B cell (primary cell): ENCODE measurements at regions of chr17 and their contacts with region 1.

Region 1: DNA sequence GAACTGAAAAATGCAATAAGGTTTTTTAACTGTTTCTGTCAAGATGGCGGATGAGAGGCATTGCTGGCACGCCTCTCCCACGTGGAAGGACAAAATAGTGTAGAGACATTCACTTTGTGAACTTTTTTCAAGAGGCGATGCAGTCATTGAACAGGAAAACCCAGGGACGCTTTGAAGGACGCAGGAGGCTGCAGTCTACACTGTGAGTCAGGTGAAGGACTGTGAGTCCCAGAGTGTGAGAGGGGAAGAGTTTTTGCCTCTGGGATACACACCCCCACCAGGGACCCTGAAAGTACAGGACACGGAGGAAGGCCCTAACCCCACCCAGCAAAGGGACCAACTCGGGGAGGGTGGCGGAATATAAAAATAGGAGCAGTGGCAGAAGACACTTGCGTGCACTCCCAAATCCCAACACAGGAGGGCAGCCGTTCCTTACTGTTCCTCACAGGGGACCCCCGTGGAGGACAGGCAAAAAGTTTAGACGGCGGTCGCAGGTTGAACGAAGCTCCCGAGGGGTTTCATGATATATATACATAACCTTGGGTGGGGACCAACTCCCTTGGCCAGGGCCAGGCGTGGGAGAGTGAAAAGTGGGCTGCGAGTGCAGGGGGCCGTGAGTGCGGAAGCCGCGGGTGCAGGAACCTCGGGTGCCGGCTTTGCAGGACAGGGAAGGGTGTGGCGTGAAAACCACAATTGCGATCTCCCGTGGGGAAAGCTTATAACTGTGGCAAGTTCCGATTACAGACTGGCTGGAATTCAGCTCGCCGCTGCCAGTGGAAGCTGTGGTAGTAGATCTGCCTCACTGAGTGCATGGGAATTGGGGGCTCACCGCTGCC is 82.0 kb upstream of the ALOX12 start:
- DNase-seq: peak; percentile 83
- ATAC-seq: peak; percentile 92
- H3K4me3 ChIP-seq: peak overlapping the region in 4 of 5 experiments; percentile 32 to 49 (median 45)
- H3K4me3 Mint-ChIP-seq: peak overlapping the region; percentile 89
- H3K27ac ChIP-seq: no peak overlapping the region
- H3K27ac Mint-ChIP-seq: no peak overlapping the region
- H3K4me1 ChIP-seq: peaks cover 5 to 11% of the 10 kb centered on the region in 2 donors
- H3K4me1 Mint-ChIP-seq: peaks cover 14% of the 10 kb centered on the region
- H3K27me3 ChIP-seq: peaks cover 0 to 10% (median 4%) of the 10 kb centered on the region in 4 experiments
- H3K27me3 Mint-ChIP-seq: peaks cover 18% of the 10 kb centered on the region
- CTCF ChIP-seq: peak; percentile 85

Region 2: DNA sequence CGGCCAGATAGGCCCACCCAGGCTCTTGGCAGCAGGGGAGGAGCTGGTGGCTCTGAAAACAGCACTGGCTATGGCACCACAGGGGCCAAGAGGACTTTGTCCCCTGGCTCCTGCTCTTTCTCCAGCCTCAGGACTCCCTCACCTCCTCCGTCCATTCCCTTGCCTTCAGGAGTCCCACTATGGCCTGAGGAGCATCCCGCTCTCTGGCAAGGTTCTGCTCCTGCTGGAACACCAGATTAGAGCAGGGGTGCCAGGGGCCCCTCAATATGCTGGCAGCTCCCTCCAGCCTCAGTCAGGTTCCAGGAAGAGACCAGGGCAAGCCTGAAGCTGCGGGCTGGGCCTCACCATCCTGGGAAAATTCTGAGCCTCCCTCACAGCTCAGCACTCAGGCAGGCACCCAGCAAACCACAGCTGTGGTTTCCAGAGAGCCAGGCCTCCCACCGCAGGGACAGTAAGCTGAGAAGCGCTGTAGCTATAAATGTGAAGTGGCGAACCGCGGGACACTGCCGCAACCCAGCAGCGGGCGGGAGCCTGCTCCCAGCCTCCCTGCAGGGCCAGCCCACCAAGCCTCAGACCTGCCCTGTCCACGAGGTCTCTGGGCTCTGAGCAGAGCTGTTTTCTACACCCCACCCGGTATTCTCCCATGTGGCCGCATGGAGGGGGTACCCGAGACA is 236.5 kb before region 1 on chr17:
- CTCF ChIA-PET with region 1: no interaction called
- POLR2A ChIA-PET with region 1: no interaction called
- intact Hi-C with region 1: no loop called
- DNase-seq: no peak
- ATAC-seq: no peak
- H3K4me3 ChIP-seq: no peak overlapping the region
- H3K4me3 Mint-ChIP-seq: no peak overlapping the region
- H3K27ac ChIP-seq: no peak overlapping the region
- H3K27ac Mint-ChIP-seq: no peak overlapping the region
- H3K4me1 ChIP-seq: peaks cover 0 to 3% of the 10 kb centered on the region in 2 donors
- H3K4me1 Mint-ChIP-seq: no peaks in the 10 kb centered on the region
- H3K27me3 ChIP-seq: peaks cover 0 to 22% (median 9%) of the 10 kb centered on the region in 4 experiments
- H3K27me3 Mint-ChIP-seq: peaks cover 17% of the 10 kb centered on the region
- CTCF ChIP-seq: no peak

Region 3: GRCh38 chr17:7014261-7014994 is 100.6 kb after region 1 on chr17:
- CTCF ChIA-PET with region 1: interaction called, 66 read pairs
- POLR2A ChIA-PET with region 1: interaction called, 6 read pairs
- intact Hi-C with region 1: no loop called
- DNase-seq: peak; percentile 99
- ATAC-seq: peak; percentile 81
- H3K4me3 ChIP-seq: peak overlapping the region; percentile 95 to 100 (median 96)
- H3K4me3 Mint-ChIP-seq: peak overlapping the region; percentile 99
- H3K27ac ChIP-seq: peak overlapping the region; percentile 97 to 99
- H3K27ac Mint-ChIP-seq: peak overlapping the region; percentile 100
- H3K4me1 ChIP-seq: peaks cover 40 to 59% of the 10 kb centered on the region in 2 donors
- H3K4me1 Mint-ChIP-seq: peaks cover 54% of the 10 kb centered on the region
- H3K27me3 ChIP-seq: no peaks in the 10 kb centered on the region
- H3K27me3 Mint-ChIP-seq: no peaks in the 10 kb centered on the region
- CTCF ChIP-seq: peak; percentile 76

Region 4: DNA sequence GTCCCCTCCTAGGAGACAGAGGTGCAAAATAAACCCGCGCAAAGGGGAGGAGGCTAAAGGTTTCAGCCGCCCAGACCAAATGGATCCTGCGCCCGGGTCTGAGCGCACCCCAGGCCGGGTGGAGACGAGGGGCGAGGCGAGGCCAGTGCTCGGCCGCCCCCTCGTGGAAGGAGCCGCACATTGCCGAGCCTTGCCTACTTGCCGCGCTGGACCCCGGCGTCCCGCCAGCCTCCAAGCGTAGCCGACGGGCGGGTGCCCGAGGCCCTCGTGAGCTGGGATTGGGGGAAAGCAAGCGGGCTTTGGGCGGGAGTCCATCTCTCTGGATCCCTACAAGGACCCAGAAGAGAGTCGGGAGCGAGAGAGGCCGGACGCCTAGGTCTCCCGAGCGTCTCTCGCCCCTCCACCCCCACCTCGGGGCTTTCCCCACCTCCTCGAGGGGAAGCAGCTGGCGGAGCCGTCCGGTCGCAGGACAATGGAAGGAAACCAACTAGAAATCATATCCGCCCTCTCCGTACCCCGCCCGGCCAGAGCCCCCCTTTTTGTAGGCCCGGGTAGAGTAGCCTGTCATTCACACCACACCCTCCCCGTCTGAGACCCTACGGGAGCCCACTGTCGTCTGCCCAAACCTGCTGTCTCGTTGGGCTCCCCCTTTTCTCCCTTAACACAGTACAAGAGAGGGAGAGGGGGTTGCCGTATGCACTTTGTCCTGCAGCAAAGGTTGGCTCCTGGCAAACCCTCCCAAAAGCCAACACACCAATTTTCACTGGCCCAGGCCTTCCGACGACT is 108.4 kb after region 1 on chr17:
- CTCF ChIA-PET with region 1: interaction called, 84 read pairs
- POLR2A ChIA-PET with region 1: interaction called, 13 read pairs
- intact Hi-C with region 1: loop called (anchors 1 kb)
- DNase-seq: peak; percentile 92
- ATAC-seq: peak; percentile 82
- H3K4me3 ChIP-seq: peak overlapping the region in 4 of 5 experiments; percentile 44 to 71 (median 62)
- H3K4me3 Mint-ChIP-seq: peak overlapping the region; percentile 82
- H3K27ac ChIP-seq: peak overlapping the region; percentile 73 to 80
- H3K27ac Mint-ChIP-seq: peak overlapping the region; percentile 92
- H3K4me1 ChIP-seq: peaks cover 21 to 27% of the 10 kb centered on the region in 2 donors
- H3K4me1 Mint-ChIP-seq: peaks cover 28% of the 10 kb centered on the region
- H3K27me3 ChIP-seq: no peaks in the 10 kb centered on the region
- H3K27me3 Mint-ChIP-seq: no peaks in the 10 kb centered on the region
- CTCF ChIP-seq: peak; percentile 98